GM12878 (cell line): ENCODE measurements at regions of chr2 and their contacts with region 1.

Region 1: GRCh38 chr2:112454586-112454985 is 21.1 kb upstream of the RGPD8 start:
- DNase-seq: no peak
- ATAC-seq: no peak
- H3K4me3 ChIP-seq: no peak overlapping the region
- H3K27ac ChIP-seq: no peak overlapping the region
- H3K4me1 ChIP-seq: no peaks in the 10 kb centered on the region
- H3K27me3 ChIP-seq: no peaks in the 10 kb centered on the region; a peak in 2 of 4 replicates
- CTCF ChIP-seq: no peak
- EP300 ChIP-seq: no peak
- POLR2A ChIP-seq: no peak
- RAD21 ChIP-seq: no peak

Region 2: DNA sequence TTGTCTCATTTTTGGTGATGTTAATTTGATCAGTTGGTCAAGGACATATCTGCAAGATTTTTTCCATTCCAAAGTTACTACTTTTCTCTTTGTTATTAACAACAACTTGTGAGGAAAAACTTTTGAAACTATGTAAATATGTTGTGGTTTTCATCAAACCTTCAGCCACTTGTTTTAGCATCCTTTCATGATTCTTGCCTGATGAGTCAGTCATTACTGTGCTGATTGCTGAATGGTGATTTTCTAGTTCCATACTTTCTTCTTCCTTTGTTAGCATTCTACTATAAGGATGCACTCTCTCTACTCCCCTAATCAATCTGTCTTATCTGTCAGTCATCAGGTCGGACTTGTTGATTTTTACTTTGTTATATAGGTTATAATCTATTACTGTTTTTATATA is 388.6 kb before region 1 on chr2:
- CTCF ChIA-PET with region 1: no interaction called
- POLR2A ChIA-PET with region 1: no interaction called
- RAD21 ChIA-PET with region 1: no interaction called
- SMC1A ChIA-PET with region 1: no interaction called
- in situ Hi-C with region 1: no loop called
- intact Hi-C with region 1: no loop called
- DNase-seq: no peak
- ATAC-seq: peak; percentile 66
- H3K4me3 ChIP-seq: no peak overlapping the region
- H3K27ac ChIP-seq: no peak overlapping the region; the same call in 1 of the 2 replicates
- H3K4me1 ChIP-seq: peaks cover 24% of the 10 kb centered on the region
- H3K27me3 ChIP-seq: no peaks in the 10 kb centered on the region
- CTCF ChIP-seq: no peak
- EP300 ChIP-seq: no peak
- POLR2A ChIP-seq: no peak
- RAD21 ChIP-seq: no peak

Region 3: DNA sequence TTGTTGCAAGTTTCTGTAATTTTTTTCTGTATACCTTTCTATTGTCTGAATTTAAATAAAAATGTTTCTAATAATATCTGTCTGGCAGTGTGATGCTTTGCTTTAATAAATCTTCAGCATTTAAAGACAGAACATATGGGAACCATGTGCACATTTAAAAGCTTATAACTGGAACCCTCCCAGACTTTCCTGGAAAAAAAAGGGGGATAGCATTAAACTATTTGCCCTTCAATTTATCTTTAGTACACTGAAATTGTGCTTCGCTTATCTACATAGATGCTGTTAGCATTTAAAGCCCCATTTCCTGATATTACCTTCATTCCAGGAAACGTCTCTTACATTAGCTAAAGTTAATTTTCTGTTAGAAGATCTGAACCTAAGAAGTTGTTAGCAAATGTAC is 114.6 kb before region 1 on chr2:
- CTCF ChIA-PET with region 1: no interaction called
- POLR2A ChIA-PET with region 1: no interaction called
- RAD21 ChIA-PET with region 1: no interaction called
- SMC1A ChIA-PET with region 1: no interaction called
- in situ Hi-C with region 1: loop called (anchors 10 kb)
- intact Hi-C with region 1: no loop called
- DNase-seq: no peak
- ATAC-seq: no peak
- H3K4me3 ChIP-seq: no peak overlapping the region
- H3K27ac ChIP-seq: no peak overlapping the region
- H3K4me1 ChIP-seq: peaks cover 6% of the 10 kb centered on the region
- H3K27me3 ChIP-seq: no peaks in the 10 kb centered on the region
- CTCF ChIP-seq: no peak
- EP300 ChIP-seq: no peak
- POLR2A ChIP-seq: no peak
- RAD21 ChIP-seq: no peak

Region 4: DNA sequence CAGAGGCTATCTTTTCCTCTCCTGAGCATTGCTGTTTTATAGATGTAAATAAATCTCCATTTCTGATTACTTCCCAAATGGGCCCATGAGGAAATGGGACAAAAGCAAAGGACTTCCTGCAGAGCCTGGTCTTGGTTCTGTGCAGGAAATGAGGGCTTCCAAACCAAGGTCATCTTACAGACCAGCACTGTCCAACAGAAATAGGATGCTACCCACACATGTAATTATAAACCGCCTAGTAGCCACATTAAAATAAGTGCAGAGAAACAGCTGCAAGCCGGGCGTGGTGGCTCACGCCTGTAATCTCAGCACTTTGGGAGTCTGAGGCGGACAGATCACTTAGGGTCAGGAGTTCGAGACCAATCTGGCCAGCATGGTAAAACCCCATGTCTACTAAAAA is 33.6 kb after region 1 on chr2:
- CTCF ChIA-PET with region 1: no interaction called
- POLR2A ChIA-PET with region 1: no interaction called
- RAD21 ChIA-PET with region 1: no interaction called
- SMC1A ChIA-PET with region 1: no interaction called
- in situ Hi-C with region 1: no loop called
- intact Hi-C with region 1: no loop called
- DNase-seq: no peak
- ATAC-seq: no peak
- H3K4me3 ChIP-seq: no peak overlapping the region
- H3K27ac ChIP-seq: no peak overlapping the region
- H3K4me1 ChIP-seq: peaks cover 6% of the 10 kb centered on the region
- H3K27me3 ChIP-seq: no peaks in the 10 kb centered on the region
- CTCF ChIP-seq: no peak
- EP300 ChIP-seq: no peak
- POLR2A ChIP-seq: no peak
- RAD21 ChIP-seq: no peak

Region 5: DNA sequence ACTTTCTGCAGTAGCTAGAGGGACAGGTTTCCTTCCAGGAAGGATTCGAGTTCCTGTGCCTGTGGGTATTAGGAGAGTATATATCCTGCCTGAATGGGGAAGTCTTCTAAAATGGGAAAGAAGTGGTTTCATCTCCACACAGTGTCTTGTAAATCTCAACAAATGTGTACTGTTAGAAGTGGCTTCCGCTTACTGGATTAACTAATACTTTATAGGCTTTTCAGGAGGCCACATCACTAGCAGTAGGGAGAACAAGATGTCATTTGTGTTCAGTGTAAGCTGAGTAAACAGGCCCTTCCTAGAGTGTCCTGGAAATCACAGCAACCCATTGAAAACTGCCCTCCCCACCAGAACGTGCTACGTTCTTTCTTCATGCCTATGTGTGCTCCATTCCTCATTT is 75.2 kb after region 1 on chr2:
- CTCF ChIA-PET with region 1: no interaction called
- POLR2A ChIA-PET with region 1: no interaction called
- RAD21 ChIA-PET with region 1: no interaction called
- SMC1A ChIA-PET with region 1: no interaction called
- in situ Hi-C with region 1: no loop called
- intact Hi-C with region 1: no loop called
- DNase-seq: no peak
- ATAC-seq: no peak
- H3K4me3 ChIP-seq: no peak overlapping the region
- H3K27ac ChIP-seq: no peak overlapping the region
- H3K4me1 ChIP-seq: no peaks in the 10 kb centered on the region
- H3K27me3 ChIP-seq: no peaks in the 10 kb centered on the region
- CTCF ChIP-seq: no peak
- EP300 ChIP-seq: no peak
- POLR2A ChIP-seq: no peak
- RAD21 ChIP-seq: no peak

Region 6: GRCh38 chr2:113806217-113806930 is 1351.8 kb after region 1 on chr2:
- CTCF ChIA-PET with region 1: no interaction called
- POLR2A ChIA-PET with region 1: no interaction called
- RAD21 ChIA-PET with region 1: no interaction called
- SMC1A ChIA-PET with region 1: no interaction called
- in situ Hi-C with region 1: no loop called
- intact Hi-C with region 1: no loop called
- DNase-seq: no peak
- ATAC-seq: no peak
- H3K4me3 ChIP-seq: no peak overlapping the region
- H3K27ac ChIP-seq: no peak overlapping the region
- H3K4me1 ChIP-seq: no peaks in the 10 kb centered on the region
- H3K27me3 ChIP-seq: no peaks in the 10 kb centered on the region
- CTCF ChIP-seq: no peak
- EP300 ChIP-seq: no peak
- POLR2A ChIP-seq: no peak
- RAD21 ChIP-seq: no peak